ENCODE measurements at regions of chr20 and their contacts with region 1.

Region 1: GRCh38 chr20:14986026-14986655 is 648.7 kb upstream of the FLRT3 start:
- DNase-seq: peak; percentile 96
- ATAC-seq: peak; percentile 80
- H3K4me3 ChIP-seq: no peak overlapping the region
- H3K27ac ChIP-seq: peak overlapping the region; percentile 91
- H3K4me1 ChIP-seq: peaks cover 33% of the 10 kb centered on the region
- H3K27me3 ChIP-seq: no peaks in the 10 kb centered on the region
- CTCF ChIP-seq: no peak

Region 2: DNA sequence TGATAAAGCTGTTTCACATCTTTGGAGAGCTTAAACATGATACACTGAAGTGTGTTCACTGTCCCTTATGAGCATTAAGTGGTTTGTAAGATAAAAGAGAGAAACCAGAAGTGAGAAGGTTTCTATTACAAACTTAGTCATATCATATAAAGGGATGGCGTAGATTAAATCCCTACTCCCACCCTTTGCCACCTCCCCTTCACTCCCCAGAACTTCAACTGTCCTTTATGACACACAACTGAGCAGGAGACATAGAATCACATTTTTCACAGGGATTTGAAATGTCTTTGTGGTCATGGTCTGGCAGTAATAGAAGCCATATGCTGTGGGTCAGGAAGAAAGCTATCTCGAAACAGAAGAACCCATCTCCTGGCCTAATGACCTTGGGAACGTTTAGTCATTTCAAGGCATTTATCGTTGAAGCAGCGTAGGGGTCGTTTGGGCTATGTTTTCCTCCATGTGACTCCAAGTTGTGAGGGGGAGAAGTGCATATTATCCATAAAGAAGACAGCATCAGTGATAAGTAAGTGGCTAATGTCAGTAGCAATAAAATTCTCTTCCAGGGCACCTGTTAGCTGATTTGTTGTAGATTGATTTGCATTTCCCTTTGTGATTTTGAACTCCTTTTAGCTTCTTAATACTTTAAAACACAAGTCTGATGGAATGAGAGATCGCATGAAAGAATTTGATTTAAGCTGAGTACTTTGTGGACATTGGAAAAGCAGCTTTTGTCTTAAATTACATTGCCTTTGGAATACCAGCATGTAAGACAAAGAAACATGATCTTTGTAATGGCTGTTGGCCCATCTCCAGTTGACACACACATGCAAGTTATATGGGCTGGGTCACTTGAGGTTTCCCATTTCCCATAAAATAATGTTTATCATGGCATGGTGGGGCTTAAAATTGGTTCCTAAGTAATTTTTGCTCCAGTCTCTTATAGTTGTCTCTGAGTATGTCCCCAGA is 147.2 kb before region 1 on chr20:
- CTCF ChIA-PET with region 1: no interaction called
- POLR2A ChIA-PET with region 1: no interaction called
- intact Hi-C with region 1: loop called (anchors 5 kb)
- DNase-seq: peak; percentile 91
- ATAC-seq: peak; percentile 93
- H3K4me3 ChIP-seq: no peak overlapping the region
- H3K27ac ChIP-seq: peak overlapping the region; percentile 35
- H3K4me1 ChIP-seq: peaks cover 22% of the 10 kb centered on the region
- H3K27me3 ChIP-seq: no peaks in the 10 kb centered on the region
- CTCF ChIP-seq: no peak

Measured in PC-3 (cell line).